ENCODE measurements at regions of chr18 and their contacts with region 1.

Region 1: GRCh38 chr18:55455938-55456337 is 132.1 kb downstream of the TCF4 start:
- DNase-seq: no peak
- ATAC-seq: peak; percentile 1 to 46 (median 20)
- H3K4me3 ChIP-seq: no peak overlapping the region
- H3K4me3 Mint-ChIP-seq: peak overlapping the region; percentile 61
- H3K27ac ChIP-seq: no peak overlapping the region
- H3K27ac Mint-ChIP-seq: peak overlapping the region; percentile 53 to 58
- H3K4me1 ChIP-seq: peaks cover 8% of the 10 kb centered on the region
- H3K4me1 Mint-ChIP-seq: peaks cover 17 to 22% of the 10 kb centered on the region in 2 donors
- H3K27me3 ChIP-seq: no peaks in the 10 kb centered on the region
- H3K27me3 Mint-ChIP-seq: no peaks in the 10 kb centered on the region
- CTCF ChIP-seq: no peak

Region 2: GRCh38 chr18:55475916-55476315 is 20.0 kb after region 1 on chr18:
- intact Hi-C with region 1: loop called (anchors 2 kb)
- DNase-seq: no peak
- ATAC-seq: no peak
- H3K4me3 ChIP-seq: no peak overlapping the region
- H3K4me3 Mint-ChIP-seq: peak overlapping the region; percentile 83
- H3K27ac ChIP-seq: peak overlapping the region; percentile 23
- H3K27ac Mint-ChIP-seq: peak overlapping the region; percentile 76 to 90
- H3K4me1 ChIP-seq: peaks cover 18% of the 10 kb centered on the region
- H3K4me1 Mint-ChIP-seq: peaks cover 36 to 37% of the 10 kb centered on the region in 2 donors
- H3K27me3 ChIP-seq: no peaks in the 10 kb centered on the region
- H3K27me3 Mint-ChIP-seq: no peaks in the 10 kb centered on the region
- CTCF ChIP-seq: no peak

Region 3: DNA sequence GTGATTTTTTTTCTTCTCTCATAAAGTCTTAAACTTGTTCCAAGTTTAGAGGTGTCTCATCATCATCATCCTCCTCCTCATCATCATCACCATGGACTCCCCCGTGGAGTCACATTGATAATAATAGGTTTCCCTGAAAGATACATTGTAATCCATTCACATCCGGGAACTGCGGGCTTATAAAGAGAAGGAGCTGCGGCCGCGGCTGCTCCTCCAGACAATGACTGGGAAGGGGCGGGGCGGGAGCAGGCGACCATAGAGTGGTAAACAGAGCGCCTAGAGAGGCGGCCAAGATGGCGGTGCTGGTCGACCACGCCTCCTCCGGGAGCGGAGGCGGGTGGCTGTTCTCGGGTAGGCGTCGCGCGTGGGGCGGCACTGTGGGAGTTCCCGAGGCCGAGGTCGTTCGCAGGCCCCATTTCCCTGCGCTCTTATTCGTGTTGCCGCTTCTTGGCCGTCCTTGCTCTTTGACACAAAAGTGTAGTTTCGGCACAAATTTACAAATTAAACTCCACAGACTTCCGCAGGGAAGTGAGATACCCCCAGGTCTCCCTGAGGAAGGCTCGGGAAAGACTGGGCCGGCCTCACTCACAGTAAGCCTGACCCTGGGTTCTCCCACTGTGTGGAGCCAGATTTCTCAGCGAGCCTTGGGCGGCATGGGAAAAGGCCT is 133.8 kb after region 1 on chr18:
- intact Hi-C with region 1: loop called (anchors 2 kb)
- DNase-seq: peak; percentile 85 to 88
- ATAC-seq: peak; percentile 91 to 95 (median 95)
- H3K4me3 ChIP-seq: peak overlapping the region; percentile 68
- H3K4me3 Mint-ChIP-seq: peak overlapping the region; percentile 92
- H3K27ac ChIP-seq: peak overlapping the region; percentile 84
- H3K27ac Mint-ChIP-seq: peak overlapping the region; percentile 80 to 84
- H3K4me1 ChIP-seq: peaks cover 7% of the 10 kb centered on the region
- H3K4me1 Mint-ChIP-seq: peaks cover 26 to 37% of the 10 kb centered on the region in 2 donors
- H3K27me3 ChIP-seq: peaks cover 6% of the 10 kb centered on the region
- H3K27me3 Mint-ChIP-seq: peaks cover 0 to 9% of the 10 kb centered on the region in 2 donors
- CTCF ChIP-seq: no peak

Region 4: GRCh38 chr18:55641486-55641885 is 185.5 kb after region 1 on chr18:
- intact Hi-C with region 1: no loop called
- DNase-seq: no peak
- ATAC-seq: no peak
- H3K4me3 ChIP-seq: no peak overlapping the region
- H3K4me3 Mint-ChIP-seq: no peak overlapping the region
- H3K27ac ChIP-seq: no peak overlapping the region
- H3K27ac Mint-ChIP-seq: no peak overlapping the region
- H3K4me1 ChIP-seq: no peaks in the 10 kb centered on the region
- H3K4me1 Mint-ChIP-seq: no peaks in the 10 kb centered on the region
- H3K27me3 ChIP-seq: no peaks in the 10 kb centered on the region
- H3K27me3 Mint-ChIP-seq: peaks cover 0 to 8% of the 10 kb centered on the region in 2 donors
- CTCF ChIP-seq: no peak

Measured in natural killer cell (primary cell).